AG04450 (cell line): ENCODE measurements at regions of chr7 and their contacts with region 1.

Region 1: DNA sequence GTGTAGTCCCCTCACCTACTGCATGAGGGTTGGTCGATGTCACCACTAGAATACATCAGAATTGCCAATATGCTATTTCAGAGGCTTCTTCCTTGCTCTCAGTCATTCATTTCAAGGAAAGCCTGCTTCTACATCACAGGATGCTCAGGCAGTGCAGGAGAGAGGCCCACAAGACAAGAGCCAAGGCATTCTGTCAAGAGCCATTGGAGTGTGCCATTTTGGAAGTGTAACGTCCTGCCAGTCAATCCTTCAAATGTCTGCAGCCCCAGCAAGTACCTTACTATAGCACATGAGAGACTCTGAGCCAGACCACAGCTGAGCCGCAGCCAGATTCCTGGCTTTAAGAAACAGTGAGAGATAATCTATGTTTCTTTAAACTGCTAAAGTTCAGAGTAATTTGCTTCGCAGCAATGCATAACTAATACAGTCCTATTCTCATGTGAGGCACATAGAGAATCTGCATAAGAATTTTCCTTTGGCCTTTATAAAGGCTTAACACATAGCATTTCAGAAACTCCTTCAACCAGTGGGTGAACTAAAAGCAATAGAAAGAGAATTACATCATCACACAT is 166.5 kb upstream of the GNAI1 start:
- DNase-seq: no peak
- H3K4me3 ChIP-seq: no peak overlapping the region
- H3K27ac ChIP-seq: no peak overlapping the region
- H3K27me3 ChIP-seq: no peaks in the 10 kb centered on the region
- CTCF ChIP-seq: no peak

Region 2: GRCh38 chr7:79664884-79665676 is 303.1 kb before region 1 on chr7:
- CTCF ChIA-PET with region 1: no interaction called
- POLR2A ChIA-PET with region 1: interaction called, 16 read pairs
- DNase-seq: no peak
- H3K4me3 ChIP-seq: no peak overlapping the region
- H3K27ac ChIP-seq: no peak overlapping the region
- H3K27me3 ChIP-seq: no peaks in the 10 kb centered on the region
- CTCF ChIP-seq: no peak

Region 3: GRCh38 chr7:79949778-79950177 is 18.4 kb before region 1 on chr7:
- CTCF ChIA-PET with region 1: no interaction called
- POLR2A ChIA-PET with region 1: no interaction called
- DNase-seq: no peak
- H3K4me3 ChIP-seq: no peak overlapping the region
- H3K27ac ChIP-seq: no peak overlapping the region
- H3K27me3 ChIP-seq: no peaks in the 10 kb centered on the region
- CTCF ChIP-seq: no peak